Prostate gland (tissue), 2 donors: ENCODE measurements at regions of chr14 and their contacts with region 1.

Region 1: DNA sequence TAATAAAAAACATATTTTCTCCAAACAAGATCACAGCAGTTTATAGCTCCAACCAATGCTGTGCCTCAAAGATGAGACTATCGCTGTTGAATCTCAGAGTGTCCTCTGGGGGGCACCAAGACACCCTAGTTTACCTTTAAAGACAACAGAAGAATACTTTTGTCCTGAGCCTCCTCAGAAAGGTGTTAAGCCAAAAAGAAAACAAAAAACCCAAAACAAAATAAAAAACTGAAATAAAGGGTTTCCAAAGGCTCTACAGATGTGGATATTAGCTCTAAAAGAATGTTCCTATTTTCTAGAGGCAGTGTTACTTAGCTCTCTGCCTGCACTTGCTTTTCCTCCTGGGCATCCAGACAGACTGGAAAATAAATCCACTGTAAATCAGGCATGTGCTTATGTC is 86.9 kb upstream of the TTC7B start:
- DNase-seq: peak; percentile 44
- H3K4me3 ChIP-seq: no peak overlapping the region
- H3K27ac ChIP-seq: no peak overlapping the region
- H3K4me1 ChIP-seq: no peaks in the 10 kb centered on the region
- H3K27me3 ChIP-seq: no peaks in the 10 kb centered on the region
- CTCF ChIP-seq: peak in 3 of 4 experiments; percentile 64 to 82 (median 76)
- POLR2A ChIP-seq: no peak

Region 2: GRCh38 chr14:90624223-90624622 is 278.9 kb before region 1 on chr14:
- intact Hi-C with region 1: no loop called
- DNase-seq: peak; percentile 28
- H3K4me3 ChIP-seq: no peak overlapping the region
- H3K27ac ChIP-seq: peak overlapping the region; percentile 33 to 44
- H3K4me1 ChIP-seq: peaks cover 9% of the 10 kb centered on the region
- H3K27me3 ChIP-seq: no peaks in the 10 kb centered on the region
- CTCF ChIP-seq: no peak
- POLR2A ChIP-seq: no peak

Region 3: DNA sequence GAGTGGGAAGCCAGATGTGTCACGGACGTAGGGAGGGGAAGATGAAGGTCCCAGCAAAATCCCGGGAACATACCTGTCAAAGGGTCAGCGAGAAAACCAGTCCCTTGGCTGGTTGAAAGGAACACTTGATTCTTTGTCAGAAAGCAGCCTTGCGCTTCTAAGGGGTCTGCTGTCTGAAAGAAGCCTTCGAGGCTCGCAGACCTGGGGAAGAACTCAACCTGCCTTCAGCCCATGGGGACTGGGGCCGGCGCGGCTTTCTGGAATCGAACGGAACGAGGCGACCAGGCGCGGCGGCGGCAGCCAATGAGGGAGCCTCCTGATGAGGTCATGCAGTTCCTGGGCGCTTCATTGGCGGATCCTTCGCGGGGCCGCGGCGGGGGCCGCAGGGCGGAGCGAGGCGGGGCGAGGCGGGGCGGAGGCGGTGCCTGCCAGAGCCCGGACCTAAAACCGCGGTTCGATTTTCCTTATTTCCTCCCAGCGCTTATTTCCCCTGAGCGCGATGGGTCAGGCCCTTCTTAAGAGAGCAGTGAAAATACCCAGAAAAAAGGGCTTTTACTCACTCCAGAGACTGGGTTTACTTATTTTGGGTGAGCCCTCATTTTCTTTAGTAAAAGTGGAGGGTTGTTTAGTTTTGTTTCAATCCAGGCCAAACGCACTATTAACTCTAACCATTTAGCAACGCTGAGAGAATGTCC is 75.0 kb before region 1 on chr14:
- intact Hi-C with region 1: no loop called
- DNase-seq: peak; percentile 94
- H3K4me3 ChIP-seq: peak overlapping the region; percentile 20 to 24
- H3K27ac ChIP-seq: peak overlapping the region; percentile 2 to 58
- H3K4me1 ChIP-seq: no peaks in the 10 kb centered on the region
- H3K27me3 ChIP-seq: no peaks in the 10 kb centered on the region
- CTCF ChIP-seq: no peak
- POLR2A ChIP-seq: peak; percentile 47

Region 4: GRCh38 chr14:91286530-91286937 is 383.4 kb after region 1 on chr14:
- intact Hi-C with region 1: loop called (anchors 5 kb)
- DNase-seq: peak; percentile 75
- H3K4me3 ChIP-seq: no peak overlapping the region
- H3K27ac ChIP-seq: no peak overlapping the region
- H3K4me1 ChIP-seq: no peaks in the 10 kb centered on the region
- H3K27me3 ChIP-seq: no peaks in the 10 kb centered on the region
- CTCF ChIP-seq: peak; percentile 91 to 97 (median 92)
- POLR2A ChIP-seq: no peak